ENCODE measurements at regions of chr17 and their contacts with region 1.

Region 1: GRCh38 chr17:81917565-81918332 is at the start of gene SIRT7:
- DNase-seq: peak; percentile 67 to 92 (median 82)
- ATAC-seq: peak; percentile 93
- H3K4me3 ChIP-seq: peak within 1 kb of the TSS; percentile 63 to 69
- H3K4me3 Mint-ChIP-seq: peak within 1 kb of the TSS; percentile 91
- H3K27ac ChIP-seq: peak within 1 kb of the TSS; percentile 51 to 75
- H3K27ac Mint-ChIP-seq: peak within 1 kb of the TSS; percentile 88
- H3K4me1 ChIP-seq: peaks cover 14% of the 10 kb centered on the region
- H3K4me1 Mint-ChIP-seq: peaks cover 27% of the 10 kb centered on the region
- H3K27me3 ChIP-seq: no peaks in the 10 kb centered on the region
- H3K27me3 Mint-ChIP-seq: no peaks in the 10 kb centered on the region
- CTCF ChIP-seq: no peak
- total RNA-seq, gene SIRT7: 75.2 to 76.1 TPM

Region 2: DNA sequence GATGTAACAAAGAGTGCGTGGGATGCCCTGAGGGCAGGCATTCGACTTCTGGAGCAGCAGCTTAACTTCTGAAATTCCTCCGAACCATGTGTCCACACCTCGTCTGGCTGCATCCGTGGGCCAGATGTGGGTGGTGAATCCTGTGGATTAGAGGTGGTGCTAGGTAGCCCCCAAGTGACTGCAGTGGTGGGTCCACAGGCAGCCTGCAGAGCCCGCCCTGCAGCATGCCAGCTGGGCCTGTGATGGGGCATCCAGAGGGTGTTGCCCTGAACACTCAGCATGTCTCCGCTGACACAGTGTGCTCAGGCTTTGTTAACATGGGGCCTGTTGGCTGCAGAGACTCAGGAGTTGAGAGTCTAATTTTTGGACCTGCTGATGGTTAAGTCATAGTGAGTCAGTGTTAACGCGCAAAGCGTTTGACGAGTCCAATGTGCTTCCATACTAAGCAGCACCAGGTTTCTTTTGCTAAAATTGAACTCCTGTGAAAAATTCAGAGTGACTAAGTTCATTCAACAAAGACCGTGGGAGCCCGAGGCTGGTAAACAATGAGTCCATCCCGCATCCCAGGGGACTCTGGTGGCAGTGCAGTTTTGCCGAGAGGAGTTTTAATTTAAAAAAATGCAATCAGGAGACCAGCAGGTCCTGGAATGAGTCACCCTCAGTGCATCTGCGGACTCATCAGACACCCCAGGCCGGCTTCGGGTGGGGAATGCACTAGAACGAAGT is 19.4 kb before region 1 on chr17:
- CTCF ChIA-PET with region 1: no interaction called
- POLR2A ChIA-PET with region 1: no interaction called
- intact Hi-C with region 1: no loop called
- DNase-seq: peak in 1 of 9 experiments; percentile 5
- ATAC-seq: no peak
- H3K4me3 ChIP-seq: no peak overlapping the region
- H3K4me3 Mint-ChIP-seq: no peak overlapping the region
- H3K27ac ChIP-seq: no peak overlapping the region
- H3K27ac Mint-ChIP-seq: no peak overlapping the region
- H3K4me1 ChIP-seq: peaks cover 8% of the 10 kb centered on the region
- H3K4me1 Mint-ChIP-seq: peaks cover 4% of the 10 kb centered on the region
- H3K27me3 ChIP-seq: peaks cover 5 to 13% of the 10 kb centered on the region in 2 experiments
- H3K27me3 Mint-ChIP-seq: peaks cover 7% of the 10 kb centered on the region
- CTCF ChIP-seq: no peak

Region 3: GRCh38 chr17:81941790-81942553 is 24.2 kb after region 1 on chr17:
- CTCF ChIA-PET with region 1: no interaction called
- POLR2A ChIA-PET with region 1: no interaction called
- intact Hi-C with region 1: loop called in 1 of 2 experiments (anchors 1 kb)
- DNase-seq: no peak
- ATAC-seq: no peak
- H3K4me3 ChIP-seq: no peak overlapping the region
- H3K4me3 Mint-ChIP-seq: no peak overlapping the region
- H3K27ac ChIP-seq: no peak overlapping the region
- H3K27ac Mint-ChIP-seq: no peak overlapping the region
- H3K4me1 ChIP-seq: peaks cover 3% of the 10 kb centered on the region
- H3K4me1 Mint-ChIP-seq: no peaks in the 10 kb centered on the region
- H3K27me3 ChIP-seq: peaks cover 0 to 2% of the 10 kb centered on the region in 2 experiments
- H3K27me3 Mint-ChIP-seq: peaks cover 3% of the 10 kb centered on the region
- CTCF ChIP-seq: no peak

Region 4: DNA sequence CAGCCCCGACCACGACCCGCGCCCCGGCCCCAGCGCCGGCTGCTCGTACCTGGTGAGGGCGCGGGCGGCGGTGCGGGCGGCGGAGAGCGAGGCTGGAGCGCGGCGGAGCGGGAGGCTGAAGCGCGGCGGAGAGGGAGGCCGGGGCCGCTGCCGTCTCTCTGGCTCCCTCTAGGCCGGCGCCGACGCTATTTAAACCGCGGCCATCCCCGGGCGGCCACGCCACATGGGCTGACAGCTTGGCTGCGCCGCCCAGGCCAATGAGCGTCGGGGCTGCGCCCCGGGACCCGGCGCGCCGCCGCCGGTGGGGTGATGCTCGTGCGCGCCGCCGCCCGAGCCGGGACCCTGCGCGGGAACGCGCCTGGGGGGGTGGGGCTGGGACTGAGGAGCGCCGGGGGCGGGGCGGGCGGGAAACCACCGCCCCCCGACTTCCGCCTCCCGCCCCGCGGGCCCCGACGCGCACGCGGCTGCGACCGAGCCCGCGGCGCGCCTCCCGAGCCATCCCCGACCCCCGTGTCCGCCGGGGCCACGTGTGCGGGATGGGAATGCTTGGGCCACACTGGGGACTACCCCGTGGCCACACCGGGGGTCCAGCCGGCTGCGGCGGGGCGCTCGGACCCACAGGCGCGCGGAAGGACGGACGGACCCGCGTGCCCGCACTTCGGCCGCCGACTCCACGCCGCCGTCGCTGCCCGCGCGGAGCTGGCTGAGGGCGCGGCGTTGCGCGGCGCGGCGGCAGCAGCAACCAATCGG is 180.5 kb after region 1 on chr17 and contains the start of gene FASN:
- CTCF ChIA-PET with region 1: no interaction called
- POLR2A ChIA-PET with region 1: no interaction called
- intact Hi-C with region 1: no loop called
- DNase-seq: peak; percentile 81 to 96 (median 92)
- ATAC-seq: peak; percentile 61
- H3K4me3 ChIP-seq: peak within 1 kb of the TSS; percentile 48 to 74
- H3K4me3 Mint-ChIP-seq: peak within 1 kb of the TSS; percentile 74
- H3K27ac ChIP-seq: peak within 1 kb of the TSS; percentile 81 to 87
- H3K27ac Mint-ChIP-seq: peak within 1 kb of the TSS; percentile 41
- H3K4me1 ChIP-seq: peaks cover 20% of the 10 kb centered on the region
- H3K4me1 Mint-ChIP-seq: peaks cover 5% of the 10 kb centered on the region
- H3K27me3 ChIP-seq: no peaks in the 10 kb centered on the region
- H3K27me3 Mint-ChIP-seq: no peaks in the 10 kb centered on the region
- CTCF ChIP-seq: peak; percentile 13
- total RNA-seq, gene FASN: 245 to 263 TPM

Measured in CD8-positive, alpha-beta T cell (primary cell).